GM10248 (cell line): ENCODE measurements at regions of chr16 and their contacts with region 1.

Region 1: GRCh38 chr16:30407102-30407803 is at the start of gene ZNF771:
- DNase-seq: peak; percentile 93
- CTCF ChIP-seq: no peak

Region 2: DNA sequence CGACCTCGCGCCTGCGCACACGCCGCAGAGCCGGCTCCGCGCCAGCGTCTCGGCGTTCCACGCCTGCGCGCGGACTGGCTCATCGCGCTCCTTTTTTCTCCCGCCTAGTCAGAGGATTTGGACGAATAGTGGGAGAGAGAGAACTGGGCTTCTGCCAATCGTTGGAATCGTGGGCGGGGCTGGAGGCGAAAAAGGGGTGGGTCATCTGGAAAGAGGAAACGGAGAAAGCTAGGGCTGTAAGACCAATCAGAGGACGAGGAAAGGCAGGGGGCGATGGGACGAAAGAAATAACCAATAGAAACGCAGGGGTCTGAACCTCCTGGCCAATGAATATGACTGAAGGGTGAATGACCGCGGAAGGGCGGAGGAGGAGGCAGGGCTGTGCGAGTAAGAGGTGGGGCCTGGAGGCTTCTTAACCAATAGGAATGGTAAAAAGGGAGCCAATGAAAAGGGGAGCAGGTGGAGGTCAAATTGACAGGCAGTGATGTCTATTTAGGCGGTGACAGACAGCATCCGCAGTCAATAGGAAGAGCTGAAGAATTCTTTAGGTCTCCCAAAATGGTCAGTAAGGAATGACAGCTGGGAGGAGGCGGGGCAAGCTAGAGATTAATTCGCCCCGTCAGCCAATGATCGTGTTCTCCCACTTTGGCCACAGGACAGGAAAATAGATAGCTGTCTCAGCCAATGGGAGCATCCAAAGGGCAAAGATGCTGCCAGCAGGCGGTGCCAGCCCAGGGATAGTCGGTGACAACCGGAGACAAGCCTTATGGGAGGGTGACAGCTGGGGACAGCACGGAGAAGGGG is 36.6 kb before region 1 on chr16 and contains the start of gene TBC1D10B:
- CTCF ChIA-PET with region 1: interaction called, 15 read pairs
- POLR2A ChIA-PET with region 1: interaction called, 3 read pairs
- DNase-seq: peak; percentile 95
- CTCF ChIP-seq: no peak

Region 3: GRCh38 chr16:30395155-30395991 is 11.9 kb before region 1 on chr16 and contains the start of gene ZNF48:
- CTCF ChIA-PET with region 1: interaction called, 30 read pairs
- POLR2A ChIA-PET with region 1: interaction called, 4 read pairs
- DNase-seq: peak; percentile 81
- CTCF ChIP-seq: peak; percentile 62

Region 4: DNA sequence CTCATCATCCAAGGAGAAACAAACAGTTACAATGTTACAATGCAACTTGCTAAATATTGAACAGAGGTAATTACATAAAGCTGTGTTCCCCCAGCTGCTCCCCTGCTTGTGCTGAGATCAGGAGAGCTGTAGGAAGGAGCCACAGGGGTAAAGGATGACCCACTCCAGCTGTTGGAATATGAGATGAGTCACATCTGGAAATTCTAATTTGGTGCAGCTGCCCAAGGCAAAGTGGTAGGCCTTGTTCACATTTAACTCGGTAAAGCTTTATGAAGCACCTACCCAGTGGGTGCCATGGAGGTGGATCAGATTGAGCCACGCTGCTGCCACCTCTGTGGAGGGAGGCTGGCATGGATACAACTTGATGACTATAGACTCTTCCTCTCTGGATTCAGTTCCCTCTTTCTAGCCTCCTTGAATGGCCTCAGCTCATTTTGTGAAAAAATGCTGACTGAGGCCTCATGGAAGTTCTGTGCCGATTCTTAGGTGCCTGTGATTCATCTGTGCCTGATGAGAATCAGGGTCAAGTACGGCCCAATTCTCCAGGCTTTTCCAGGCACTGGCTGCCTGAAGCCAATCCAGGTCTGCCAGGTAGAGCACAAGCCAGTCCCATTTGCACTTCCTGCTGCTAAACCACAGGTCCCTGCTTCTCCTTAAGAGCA is 195.5 kb after region 1 on chr16:
- CTCF ChIA-PET with region 1: interaction called, 14 read pairs
- POLR2A ChIA-PET with region 1: interaction called, 3 read pairs
- DNase-seq: no peak
- CTCF ChIP-seq: no peak